ENCODE measurements at regions of chr18 and their contacts with region 1.

Region 1: GRCh38 chr18:48119204-48119603 is 188.7 kb upstream of the SMAD2 start:
- DNase-seq: no peak
- H3K4me3 ChIP-seq: no peak overlapping the region
- CTCF ChIP-seq: no peak

Region 2: GRCh38 chr18:48186061-48186798 is 67.0 kb after region 1 on chr18:
- in situ Hi-C with region 1: loop called (anchors 5 kb)
- DNase-seq: no peak
- H3K4me3 ChIP-seq: no peak overlapping the region
- CTCF ChIP-seq: no peak

Measured in astrocyte of the cerebellum (primary cell).